Activated T-helper 1 cell treated with anti-CD3 and anti-CD28 coated beads, Interleukin-12 subunit alpha, Interleukin-12 subunit beta, Interleukin-2, Interleukin-4 antibody, amounts not matched to agents 30 ng/mL and 10 ng/mL and 1 ng/mL, durations not matched to agents 14 hours and 24 hours and 36 hours (primary cell): ENCODE measurements at regions of chr4 and their contacts with region 1.

Region 1: DNA sequence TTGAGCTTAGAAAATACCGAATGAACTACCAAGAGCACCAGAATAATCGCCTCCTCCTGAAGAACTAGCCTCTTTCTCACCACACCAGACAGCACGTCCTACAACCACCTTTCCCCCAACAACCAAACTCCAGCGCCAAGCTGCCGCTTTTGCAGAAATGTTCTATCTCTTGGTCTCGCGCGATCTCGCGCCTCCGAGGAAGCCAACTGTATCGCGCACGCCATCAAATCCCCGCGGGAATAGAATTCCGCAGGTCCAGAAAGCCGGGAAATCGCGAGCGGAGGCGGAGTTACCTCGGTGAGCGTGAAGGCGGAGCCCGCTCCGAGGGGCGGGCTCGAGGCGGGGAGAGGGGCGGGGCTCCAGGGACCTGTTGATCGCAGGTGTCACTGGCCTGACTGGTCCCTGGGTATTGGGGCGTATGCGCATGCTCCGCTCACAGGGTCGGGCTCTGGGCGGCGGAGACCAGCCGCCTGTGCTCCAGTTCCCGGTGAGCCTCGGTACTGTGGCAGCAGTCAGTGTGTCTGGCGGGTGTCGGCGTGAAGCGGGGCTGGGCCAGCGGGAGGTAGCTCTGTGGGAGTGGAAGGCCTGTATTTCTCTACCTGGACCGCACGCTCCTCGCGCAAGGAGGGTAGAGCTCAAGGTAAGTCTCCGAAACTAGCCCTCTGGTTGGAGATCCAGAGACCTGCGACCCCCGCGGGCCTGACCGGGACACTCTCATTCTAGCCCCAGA is at the start of gene USP53:
- DNase-seq: peak; percentile 90
- H3K4me3 Mint-ChIP-seq: peak within 1 kb of the TSS; percentile 95
- H3K27ac Mint-ChIP-seq: peak within 1 kb of the TSS; percentile 95
- H3K4me1 Mint-ChIP-seq: peaks cover 39% of the 10 kb centered on the region
- H3K27me3 Mint-ChIP-seq: peaks cover 5% of the 10 kb centered on the region
- total RNA-seq, gene USP53: 6.1 and 8.5 TPM in 2 replicates

Region 2: GRCh38 chr4:118684873-118685811 is 527.3 kb before region 1 on chr4 and contains the start of gene METTL14:
- intact Hi-C with region 1: loop called (anchors 1 kb)
- DNase-seq: peak; percentile 83
- H3K4me3 Mint-ChIP-seq: peak within 1 kb of the TSS; percentile 97
- H3K27ac Mint-ChIP-seq: peak within 1 kb of the TSS; percentile 88
- H3K4me1 Mint-ChIP-seq: peaks cover 28% of the 10 kb centered on the region
- H3K27me3 Mint-ChIP-seq: no peaks in the 10 kb centered on the region
- total RNA-seq, gene METTL14: 44.6 and 48.3 TPM in 2 replicates

Region 3: GRCh38 chr4:119041951-119042560 is 170.3 kb before region 1 on chr4:
- intact Hi-C with region 1: loop called (anchors 1 kb)
- DNase-seq: peak; percentile 40
- H3K4me3 Mint-ChIP-seq: no peak overlapping the region
- H3K27ac Mint-ChIP-seq: no peak overlapping the region
- H3K4me1 Mint-ChIP-seq: peaks cover 6% of the 10 kb centered on the region
- H3K27me3 Mint-ChIP-seq: no peaks in the 10 kb centered on the region

Region 4: GRCh38 chr4:119268451-119268850 is 56.1 kb after region 1 on chr4:
- intact Hi-C with region 1: loop called (anchors 1 kb)
- DNase-seq: no peak
- H3K4me3 Mint-ChIP-seq: no peak overlapping the region
- H3K27ac Mint-ChIP-seq: no peak overlapping the region
- H3K4me1 Mint-ChIP-seq: peaks cover 8% of the 10 kb centered on the region
- H3K27me3 Mint-ChIP-seq: no peaks in the 10 kb centered on the region

Region 5: GRCh38 chr4:119300101-119300978 is 87.9 kb after region 1 on chr4:
- intact Hi-C with region 1: loop called (anchors 1 kb)
- DNase-seq: peak; percentile 93
- H3K4me3 Mint-ChIP-seq: peak overlapping the region; percentile 97
- H3K27ac Mint-ChIP-seq: peak overlapping the region; percentile 97
- H3K4me1 Mint-ChIP-seq: peaks cover 38% of the 10 kb centered on the region
- H3K27me3 Mint-ChIP-seq: no peaks in the 10 kb centered on the region